GM10248 (cell line): ENCODE measurements at regions of chr12 and their contacts with region 1.

Region 1: DNA sequence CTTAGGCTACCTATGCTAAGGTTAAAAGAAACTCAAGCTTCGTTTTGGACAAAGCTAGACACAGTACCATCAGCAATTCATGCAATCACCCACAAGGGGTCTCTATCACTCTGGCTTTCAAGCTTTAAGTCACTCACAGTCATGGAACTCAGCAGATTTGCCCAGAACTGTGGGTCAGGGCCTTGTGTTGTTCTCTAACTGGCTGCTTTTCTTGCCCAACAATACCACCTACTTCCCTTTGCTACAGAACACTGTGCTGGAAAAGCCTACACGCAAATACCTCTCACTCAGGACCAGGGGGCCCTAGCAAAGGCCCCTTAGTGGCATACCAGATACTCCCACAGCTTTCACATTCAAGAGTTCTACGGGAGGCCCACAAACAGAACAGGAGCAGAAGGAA is 9.1 kb downstream of the NEMP1 start:
- DNase-seq: peak; percentile 65
- CTCF ChIP-seq: peak; percentile 75

Region 2: DNA sequence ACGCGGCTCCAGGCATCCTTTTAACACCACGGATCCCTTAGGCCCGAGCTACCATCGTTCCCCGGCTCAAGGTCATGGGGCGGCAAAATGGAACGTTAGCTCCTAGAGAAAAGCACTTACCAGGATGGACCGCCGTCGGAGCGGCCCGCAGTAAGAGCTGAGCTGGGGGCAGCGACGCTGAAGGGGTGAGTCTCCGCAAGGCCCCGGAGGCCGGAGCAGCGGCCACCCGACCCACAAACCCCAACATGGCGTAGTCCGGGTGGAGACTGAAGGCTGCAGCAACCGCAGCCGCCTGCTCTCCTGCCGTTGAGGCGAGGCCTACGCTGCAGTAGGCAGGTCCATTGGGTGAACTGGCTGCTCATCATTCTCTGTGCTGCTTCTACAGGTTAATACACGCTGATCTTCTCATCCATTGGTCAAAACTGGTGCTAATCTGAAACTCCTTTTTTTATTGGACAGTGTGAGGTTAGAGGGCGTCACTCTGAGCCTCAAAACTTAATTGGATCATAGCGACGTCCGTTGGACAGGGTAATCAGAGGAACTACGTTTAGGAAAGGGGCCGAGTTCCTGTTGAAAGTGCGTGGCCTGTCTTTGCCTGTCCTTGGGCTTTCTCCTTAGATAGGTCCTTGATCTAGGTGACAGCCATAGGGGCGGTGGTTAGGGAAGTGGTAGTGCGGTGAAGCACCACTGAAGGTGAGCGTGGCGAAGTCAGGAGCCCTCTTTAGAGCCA is 423.6 kb before region 1 on chr12 and contains the start of gene ATP5F1B:
- CTCF ChIA-PET with region 1: no interaction called
- POLR2A ChIA-PET with region 1: no interaction called
- DNase-seq: peak; percentile 97
- CTCF ChIP-seq: no peak

Region 3: GRCh38 chr12:57088459-57089248 is 19.1 kb after region 1 on chr12 and contains the start of gene NAB2:
- CTCF ChIA-PET with region 1: interaction called, 81 read pairs
- POLR2A ChIA-PET with region 1: interaction called, 4 read pairs
- DNase-seq: peak; percentile 92
- CTCF ChIP-seq: no peak

Region 4: GRCh38 chr12:57096750-57097553 is 27.4 kb after region 1 on chr12:
- CTCF ChIA-PET with region 1: interaction called, 81 read pairs
- POLR2A ChIA-PET with region 1: interaction called, 3 read pairs
- DNase-seq: no peak
- CTCF ChIP-seq: no peak

Region 5: DNA sequence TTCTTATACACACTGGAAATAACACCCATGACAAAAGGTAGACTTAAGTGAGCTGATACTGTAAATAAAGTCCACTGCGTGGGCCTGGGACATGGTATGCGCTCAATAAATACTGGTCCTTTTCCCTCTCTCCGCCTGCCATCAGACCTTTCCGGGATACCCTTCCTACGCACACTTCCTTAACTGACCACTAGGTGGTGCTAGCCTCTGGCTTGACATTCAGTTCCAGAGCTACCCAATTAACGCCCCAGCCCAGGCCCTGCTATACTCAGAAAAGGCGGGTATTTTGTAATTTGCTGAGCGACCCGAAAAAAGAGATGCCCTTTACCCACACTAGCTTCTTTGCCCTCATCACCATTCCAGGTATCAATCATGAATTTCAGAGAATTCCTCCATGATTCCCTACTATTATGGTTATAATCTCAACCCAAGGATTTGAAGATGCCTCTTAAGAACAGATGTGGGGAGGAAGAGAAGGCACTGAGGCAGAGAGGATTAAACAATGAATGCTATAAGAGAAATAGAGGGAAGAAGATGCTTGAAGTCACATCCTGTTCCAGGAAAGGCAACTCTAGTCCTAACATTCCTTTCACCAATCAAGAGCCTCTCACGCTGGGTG is 54.8 kb after region 1 on chr12:
- CTCF ChIA-PET with region 1: interaction called, 17 read pairs
- POLR2A ChIA-PET with region 1: no interaction called
- DNase-seq: peak; percentile 70
- CTCF ChIP-seq: peak; percentile 74

Region 6: DNA sequence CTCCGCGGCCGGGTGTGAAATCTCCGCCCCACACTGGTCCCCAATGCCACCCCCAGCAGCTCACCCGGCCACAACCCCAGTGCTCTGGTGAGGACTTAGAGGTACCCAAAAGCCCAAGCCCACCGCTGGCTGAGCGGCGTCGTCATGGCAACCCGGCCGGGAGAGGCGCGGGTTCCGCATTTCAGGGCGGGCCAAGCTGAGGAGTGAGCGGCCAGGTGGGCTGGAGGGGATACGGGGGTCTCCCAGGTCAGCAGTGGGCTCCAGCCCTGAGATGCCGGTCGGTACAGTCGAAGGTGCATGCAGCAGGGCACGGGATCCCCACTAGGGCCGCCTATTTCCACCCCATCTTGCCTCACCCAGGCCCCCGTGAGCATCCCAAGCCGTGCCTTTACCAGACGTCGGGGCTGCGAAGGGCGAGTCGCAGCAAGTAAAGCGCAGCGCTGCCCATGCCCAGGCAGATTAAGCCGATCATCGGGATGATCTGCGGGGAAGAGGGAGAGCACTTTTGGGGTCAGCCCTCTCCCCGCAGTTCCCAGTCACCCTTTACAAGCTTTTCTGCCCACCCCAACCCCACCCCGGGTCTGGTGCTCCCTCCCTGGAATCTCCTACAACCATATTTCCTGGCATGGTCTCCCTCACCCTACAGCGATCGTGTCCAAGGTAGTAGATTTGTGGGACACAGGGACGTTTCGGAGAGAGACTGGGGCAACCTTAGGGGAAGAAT is 166.8 kb after region 1 on chr12:
- CTCF ChIA-PET with region 1: no interaction called
- POLR2A ChIA-PET with region 1: no interaction called
- DNase-seq: no peak
- CTCF ChIP-seq: no peak